H1 (cell line): ENCODE measurements at regions of chr20 and their contacts with region 1.

Region 1: GRCh38 chr20:37384683-37385174 is 38.8 kb downstream of the SRC start:
- DNase-seq: peak in 1 of 2 experiments; percentile 94
- H3K4me3 ChIP-seq: peak overlapping the region; percentile 22 to 63 (median 50); a peak in 7 of 8 replicates
- H3K27ac ChIP-seq: no peak overlapping the region
- H3K4me1 ChIP-seq: peaks cover 0 to 1% (median 0%) of the 10 kb centered on the region in 4 experiments; a peak in 2 of 7 replicates
- H3K27me3 ChIP-seq: no peaks in the 10 kb centered on the region
- CTCF ChIP-seq: peak; percentile 82 to 94 (median 91)
- EP300 ChIP-seq: no peak
- POLR2A ChIP-seq: no peak
- RAD21 ChIP-seq: peak; percentile 70 to 81

Region 2: DNA sequence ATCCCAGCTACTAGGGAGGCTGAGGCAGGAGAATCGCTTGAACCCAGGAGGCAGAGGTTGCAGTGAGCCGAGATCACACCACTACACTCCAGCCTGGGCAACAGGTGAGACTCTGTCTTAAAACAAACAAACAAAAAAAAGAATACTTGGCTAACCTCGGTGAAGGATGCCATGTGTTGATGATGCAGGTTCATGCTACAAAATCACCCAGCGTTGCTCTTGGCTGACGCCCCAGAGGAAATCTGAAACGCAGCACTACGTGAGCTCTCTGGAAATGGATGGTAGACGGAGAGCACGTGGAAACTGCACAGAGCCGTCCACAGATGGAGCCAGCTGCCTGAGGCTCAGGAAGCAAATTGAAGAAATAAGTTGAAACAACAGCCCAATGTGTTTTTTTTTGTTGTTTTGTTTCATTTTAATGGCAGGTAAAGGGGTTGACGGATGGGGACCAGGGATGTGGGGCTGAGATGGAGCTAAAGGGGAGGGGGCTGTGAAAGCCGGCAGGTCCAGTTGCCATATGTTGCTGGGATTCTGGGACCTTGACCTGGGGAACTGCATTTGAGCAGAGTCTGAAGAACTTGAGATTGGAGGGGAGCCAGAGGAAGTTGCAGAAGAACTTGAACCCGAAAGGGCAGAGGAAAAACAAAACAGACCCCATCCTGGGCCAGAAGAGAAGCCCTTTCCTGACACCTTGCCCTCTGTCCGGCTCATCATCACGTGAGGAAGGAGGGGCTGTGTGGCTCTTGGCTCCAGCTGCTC is 108.1 kb before region 1 on chr20:
- CTCF ChIA-PET with region 1: interaction called, 68 read pairs
- POLR2A ChIA-PET with region 1: interaction called, 3 read pairs
- DNase-seq: no peak
- H3K4me3 ChIP-seq: no peak overlapping the region
- H3K27ac ChIP-seq: no peak overlapping the region
- H3K4me1 ChIP-seq: peaks cover 0 to 13% (median 0%) of the 10 kb centered on the region in 4 experiments; a peak in 2 of 7 replicates
- H3K27me3 ChIP-seq: no peaks in the 10 kb centered on the region
- CTCF ChIP-seq: peak in 1 of 3 experiments; percentile 17; a peak in 1 of 4 replicates
- EP300 ChIP-seq: no peak
- POLR2A ChIP-seq: no peak
- RAD21 ChIP-seq: peak; percentile 22 to 23; a peak in 2 of 4 replicates

Region 3: GRCh38 chr20:37282556-37282955 is 102.2 kb before region 1 on chr20:
- CTCF ChIA-PET with region 1: interaction called, 39 read pairs
- POLR2A ChIA-PET with region 1: interaction called, 3 read pairs
- DNase-seq: no peak
- H3K4me3 ChIP-seq: no peak overlapping the region
- H3K27ac ChIP-seq: no peak overlapping the region
- H3K4me1 ChIP-seq: peaks cover 0 to 16% (median 0%) of the 10 kb centered on the region in 4 experiments; a peak in 3 of 7 replicates
- H3K27me3 ChIP-seq: 0 out of 7 replicates have a peak, but pooled peaks cover 0 to 4% (median 0%) of the 10 kb centered on the region in 4 experiments
- CTCF ChIP-seq: peak in 2 of 3 experiments; percentile 41 to 56; a peak in 2 of 4 replicates
- EP300 ChIP-seq: no peak
- POLR2A ChIP-seq: no peak
- RAD21 ChIP-seq: peak; percentile 70 to 73

Region 4: DNA sequence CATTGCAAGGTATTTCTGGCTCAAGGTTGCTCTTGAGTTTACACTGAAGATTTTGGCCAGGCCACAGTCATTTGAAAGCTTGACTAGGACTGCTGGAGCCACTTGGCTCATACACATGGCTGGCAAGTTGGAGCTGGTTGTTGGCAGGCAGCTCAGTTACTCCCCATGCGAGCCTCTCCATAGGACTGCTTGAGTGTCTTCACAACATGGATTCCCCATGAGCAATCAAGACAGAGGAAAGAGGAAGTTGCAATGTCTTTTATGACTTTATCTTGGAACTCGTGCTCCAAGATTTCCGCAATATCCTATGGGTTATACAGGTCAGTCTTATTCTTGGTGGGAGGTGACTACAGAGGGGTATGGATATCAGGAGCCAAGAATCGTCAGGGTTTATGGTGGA is 96.6 kb before region 1 on chr20:
- CTCF ChIA-PET with region 1: interaction called, 39 read pairs
- POLR2A ChIA-PET with region 1: no interaction called
- DNase-seq: no peak
- H3K4me3 ChIP-seq: no peak overlapping the region
- H3K27ac ChIP-seq: no peak overlapping the region
- H3K4me1 ChIP-seq: peaks cover 0 to 2% (median 0%) of the 10 kb centered on the region in 4 experiments; a peak in 3 of 7 replicates
- H3K27me3 ChIP-seq: 0 out of 7 replicates have a peak, but pooled peaks cover 0 to 4% (median 0%) of the 10 kb centered on the region in 4 experiments
- CTCF ChIP-seq: no peak
- EP300 ChIP-seq: no peak
- POLR2A ChIP-seq: no peak
- RAD21 ChIP-seq: no peak

Region 5: DNA sequence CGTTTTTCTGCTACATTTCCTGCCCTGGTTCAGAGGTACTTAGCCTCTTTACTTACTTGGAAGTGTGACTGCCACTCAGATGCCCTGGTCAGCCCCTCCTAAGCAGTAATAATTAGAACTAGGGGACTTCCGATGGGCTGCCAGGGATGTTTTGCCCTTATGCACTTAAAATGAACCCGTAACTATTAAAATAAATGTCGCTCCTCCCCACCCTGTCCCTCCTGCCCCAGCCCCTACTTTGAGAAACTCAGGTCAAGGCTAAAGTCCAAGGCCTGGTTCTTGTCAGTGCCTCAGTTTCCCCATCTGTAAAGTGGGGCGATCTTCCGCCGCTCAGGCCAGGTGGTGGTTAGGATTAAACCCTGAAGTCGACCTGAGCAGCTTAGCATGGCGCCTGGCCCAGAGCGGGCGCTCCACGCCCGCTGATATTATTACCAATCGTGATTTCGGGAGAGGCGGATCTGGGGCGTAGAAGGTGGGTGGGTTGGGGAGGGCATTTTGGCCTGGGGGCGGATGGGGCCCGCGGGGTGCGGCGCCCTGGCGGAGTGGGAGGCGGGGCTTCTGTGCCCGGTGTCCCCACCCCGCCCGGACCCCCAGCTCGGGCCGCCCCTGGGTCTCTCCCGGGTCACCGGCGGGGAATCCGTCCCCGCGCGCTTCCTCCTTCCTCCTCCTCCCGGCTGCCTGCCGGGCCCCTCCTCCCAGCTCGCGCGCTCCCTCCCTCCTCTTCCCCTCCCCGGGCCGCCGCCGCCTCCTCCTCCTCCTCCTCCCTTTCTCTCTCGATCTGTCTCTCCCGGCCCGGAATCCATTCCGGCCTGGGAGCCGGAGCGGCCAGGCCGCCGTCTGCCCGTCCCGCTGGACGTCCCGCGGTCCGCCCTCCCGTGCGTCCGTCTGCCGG is 39.1 kb before region 1 on chr20 and contains the start of gene SRC:
- CTCF ChIA-PET with region 1: interaction called, 11 read pairs
- POLR2A ChIA-PET with region 1: interaction called, 4 read pairs
- DNase-seq: peak; percentile 39 to 82
- H3K4me3 ChIP-seq: peak within 1 kb of the TSS; percentile 33 to 67 (median 48)
- H3K27ac ChIP-seq: no peak within 1 kb of the TSS; the same call in 1 of the 2 replicates
- H3K4me1 ChIP-seq: peaks cover 0 to 11% (median 6%) of the 10 kb centered on the region in 4 experiments; a peak in 4 of 7 replicates
- H3K27me3 ChIP-seq: no peaks in the 10 kb centered on the region
- CTCF ChIP-seq: no peak
- EP300 ChIP-seq: no peak
- POLR2A ChIP-seq: peak in 1 of 2 experiments; percentile 73; a peak in 1 of 3 replicates
- RAD21 ChIP-seq: no peak
- total RNA-seq, gene SRC: 28.8 and 29.8 TPM in 2 replicates

Region 6: GRCh38 chr20:37373020-37373598 is 11.6 kb before region 1 on chr20:
- CTCF ChIA-PET with region 1: interaction called, 13 read pairs
- POLR2A ChIA-PET with region 1: no interaction called
- DNase-seq: no peak
- H3K4me3 ChIP-seq: no peak overlapping the region
- H3K27ac ChIP-seq: no peak overlapping the region
- H3K4me1 ChIP-seq: no peaks in the 10 kb centered on the region
- H3K27me3 ChIP-seq: no peaks in the 10 kb centered on the region
- CTCF ChIP-seq: no peak
- EP300 ChIP-seq: no peak
- POLR2A ChIP-seq: no peak
- RAD21 ChIP-seq: no peak

Region 7: GRCh38 chr20:37534401-37535157 is 149.8 kb after region 1 on chr20:
- CTCF ChIA-PET with region 1: interaction called, 14 read pairs
- POLR2A ChIA-PET with region 1: no interaction called
- DNase-seq: peak in 1 of 2 experiments; percentile 70
- H3K4me3 ChIP-seq: no peak overlapping the region
- H3K27ac ChIP-seq: no peak overlapping the region
- H3K4me1 ChIP-seq: no peaks in the 10 kb centered on the region
- H3K27me3 ChIP-seq: no peaks in the 10 kb centered on the region
- CTCF ChIP-seq: peak in 2 of 3 experiments; percentile 78 to 90; a peak in 3 of 4 replicates
- EP300 ChIP-seq: no peak
- POLR2A ChIP-seq: no peak
- RAD21 ChIP-seq: peak; percentile 97 to 98